B cell (primary cell): ENCODE measurements at regions of chr17 and their contacts with region 1.

Region 1: GRCh38 chr17:43338886-43339516 is 59.8 kb upstream of the ARL4D start:
- DNase-seq: peak; percentile 73
- ATAC-seq: no peak
- H3K4me3 ChIP-seq: no peak overlapping the region
- H3K4me3 Mint-ChIP-seq: no peak overlapping the region
- H3K27ac ChIP-seq: no peak overlapping the region
- H3K27ac Mint-ChIP-seq: no peak overlapping the region
- H3K4me1 ChIP-seq: peaks cover 9 to 19% of the 10 kb centered on the region in 2 donors
- H3K4me1 Mint-ChIP-seq: peaks cover 21% of the 10 kb centered on the region
- H3K27me3 ChIP-seq: no peaks in the 10 kb centered on the region
- H3K27me3 Mint-ChIP-seq: peaks cover 7% of the 10 kb centered on the region
- CTCF ChIP-seq: peak; percentile 86

Region 2: GRCh38 chr17:42843358-42843934 is 495.6 kb before region 1 on chr17:
- CTCF ChIA-PET with region 1: interaction called, 5 read pairs
- POLR2A ChIA-PET with region 1: no interaction called
- intact Hi-C with region 1: loop called (anchors 2 kb)
- DNase-seq: peak; percentile 60
- ATAC-seq: peak; percentile 49
- H3K4me3 ChIP-seq: no peak overlapping the region
- H3K4me3 Mint-ChIP-seq: no peak overlapping the region
- H3K27ac ChIP-seq: no peak overlapping the region
- H3K27ac Mint-ChIP-seq: no peak overlapping the region
- H3K4me1 ChIP-seq: no peaks in the 10 kb centered on the region
- H3K4me1 Mint-ChIP-seq: no peaks in the 10 kb centered on the region
- H3K27me3 ChIP-seq: no peaks in the 10 kb centered on the region
- H3K27me3 Mint-ChIP-seq: no peaks in the 10 kb centered on the region
- CTCF ChIP-seq: peak; percentile 67

Region 3: GRCh38 chr17:43006639-43007551 is 332.1 kb before region 1 on chr17 and contains the start of gene IFI35:
- CTCF ChIA-PET with region 1: interaction called, 28 read pairs
- POLR2A ChIA-PET with region 1: no interaction called
- intact Hi-C with region 1: loop called (anchors 1 kb)
- DNase-seq: peak; percentile 89
- ATAC-seq: peak; percentile 99
- H3K4me3 ChIP-seq: peak within 1 kb of the TSS; percentile 73 to 91 (median 82)
- H3K4me3 Mint-ChIP-seq: peak within 1 kb of the TSS; percentile 100
- H3K27ac ChIP-seq: peak within 1 kb of the TSS; percentile 83 to 93
- H3K27ac Mint-ChIP-seq: peak within 1 kb of the TSS; percentile 100
- H3K4me1 ChIP-seq: peaks cover 8 to 13% of the 10 kb centered on the region in 2 donors
- H3K4me1 Mint-ChIP-seq: peaks cover 16% of the 10 kb centered on the region
- H3K27me3 ChIP-seq: no peaks in the 10 kb centered on the region
- H3K27me3 Mint-ChIP-seq: no peaks in the 10 kb centered on the region
- CTCF ChIP-seq: peak; percentile 64
- total RNA-seq, gene IFI35: 34.7 and 37.2 TPM in 2 replicates

Region 4: DNA sequence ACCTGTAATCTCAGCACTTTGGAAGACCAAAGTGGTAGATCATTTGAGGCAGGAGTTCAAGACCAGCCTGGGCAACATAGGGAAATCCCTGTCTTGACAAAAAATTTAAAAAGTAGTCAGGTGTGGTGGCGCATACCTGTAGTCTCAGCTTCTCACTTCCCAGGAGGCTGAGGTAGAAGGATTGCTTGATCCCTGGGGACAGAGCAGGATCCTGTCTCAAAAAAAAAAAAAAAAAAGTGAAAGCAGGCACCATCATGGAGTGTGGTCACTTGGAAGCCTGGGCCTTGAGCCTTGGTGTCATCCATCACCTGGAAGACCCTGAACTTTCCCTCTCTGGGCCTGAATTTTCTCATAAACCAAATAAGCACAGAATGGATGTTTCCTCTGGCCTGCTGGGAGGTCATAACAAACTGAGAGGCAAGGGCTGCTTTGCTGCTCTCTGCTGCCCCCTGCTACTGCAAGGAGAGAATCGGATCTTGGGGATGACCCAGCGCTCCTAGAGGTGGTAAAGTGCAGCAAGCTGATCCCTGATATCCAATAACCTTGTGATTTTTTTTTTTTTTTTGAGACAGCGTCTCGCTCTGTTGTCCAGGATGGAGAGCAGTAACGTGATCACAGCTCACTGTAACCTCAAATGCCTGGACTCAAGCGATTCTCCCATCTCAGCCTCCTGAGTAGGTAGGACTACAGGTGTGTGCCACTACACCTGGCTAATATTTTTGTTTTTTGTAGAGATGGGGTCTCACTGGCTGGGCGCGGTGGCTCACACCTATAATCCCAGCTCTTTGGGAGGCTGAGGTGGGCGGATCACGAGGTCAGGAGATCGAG is 29.3 kb before region 1 on chr17:
- CTCF ChIA-PET with region 1: interaction called, 24 read pairs
- POLR2A ChIA-PET with region 1: interaction called, 9 read pairs
- intact Hi-C with region 1: no loop called
- DNase-seq: peak; percentile 55
- ATAC-seq: no peak
- H3K4me3 ChIP-seq: no peak overlapping the region
- H3K4me3 Mint-ChIP-seq: no peak overlapping the region
- H3K27ac ChIP-seq: peak overlapping the region in 1 of 2 donors; percentile 49
- H3K27ac Mint-ChIP-seq: peak overlapping the region; percentile 32
- H3K4me1 ChIP-seq: no peaks in the 10 kb centered on the region
- H3K4me1 Mint-ChIP-seq: peaks cover 5% of the 10 kb centered on the region
- H3K27me3 ChIP-seq: no peaks in the 10 kb centered on the region
- H3K27me3 Mint-ChIP-seq: no peaks in the 10 kb centered on the region
- CTCF ChIP-seq: no peak

Region 5: GRCh38 chr17:43316522-43317142 is 22.4 kb before region 1 on chr17:
- CTCF ChIA-PET with region 1: interaction called, 24 read pairs
- POLR2A ChIA-PET with region 1: interaction called, 11 read pairs
- intact Hi-C with region 1: no loop called
- DNase-seq: peak; percentile 78
- ATAC-seq: no peak
- H3K4me3 ChIP-seq: peak overlapping the region in 1 of 5 experiments; percentile 25
- H3K4me3 Mint-ChIP-seq: peak overlapping the region; percentile 29
- H3K27ac ChIP-seq: peak overlapping the region in 1 of 2 donors; percentile 46
- H3K27ac Mint-ChIP-seq: no peak overlapping the region
- H3K4me1 ChIP-seq: peaks cover 0 to 4% of the 10 kb centered on the region in 2 donors
- H3K4me1 Mint-ChIP-seq: peaks cover 16% of the 10 kb centered on the region
- H3K27me3 ChIP-seq: no peaks in the 10 kb centered on the region
- H3K27me3 Mint-ChIP-seq: no peaks in the 10 kb centered on the region
- CTCF ChIP-seq: no peak

Region 6: GRCh38 chr17:43360739-43361505 is 21.9 kb after region 1 on chr17:
- CTCF ChIA-PET with region 1: interaction called, 11 read pairs
- POLR2A ChIA-PET with region 1: no interaction called
- intact Hi-C with region 1: no loop called
- DNase-seq: peak; percentile 94
- ATAC-seq: peak; percentile 80
- H3K4me3 ChIP-seq: peak overlapping the region; percentile 61 to 88 (median 70)
- H3K4me3 Mint-ChIP-seq: peak overlapping the region; percentile 96
- H3K27ac ChIP-seq: peak overlapping the region; percentile 97 to 99
- H3K27ac Mint-ChIP-seq: peak overlapping the region; percentile 100
- H3K4me1 ChIP-seq: peaks cover 9 to 15% of the 10 kb centered on the region in 2 donors
- H3K4me1 Mint-ChIP-seq: peaks cover 21% of the 10 kb centered on the region
- H3K27me3 ChIP-seq: no peaks in the 10 kb centered on the region
- H3K27me3 Mint-ChIP-seq: no peaks in the 10 kb centered on the region
- CTCF ChIP-seq: no peak